ENCODE measurements at regions of chr12 and their contacts with region 1.

Region 1: GRCh38 chr12:12376646-12377448 is 20.0 kb downstream of the BORCS5 start:
- H3K4me3 ChIP-seq: no peak overlapping the region
- H3K27ac ChIP-seq: no peak overlapping the region
- H3K4me1 ChIP-seq: no peaks in the 10 kb centered on the region
- CTCF ChIP-seq: peak; percentile 46

Region 2: DNA sequence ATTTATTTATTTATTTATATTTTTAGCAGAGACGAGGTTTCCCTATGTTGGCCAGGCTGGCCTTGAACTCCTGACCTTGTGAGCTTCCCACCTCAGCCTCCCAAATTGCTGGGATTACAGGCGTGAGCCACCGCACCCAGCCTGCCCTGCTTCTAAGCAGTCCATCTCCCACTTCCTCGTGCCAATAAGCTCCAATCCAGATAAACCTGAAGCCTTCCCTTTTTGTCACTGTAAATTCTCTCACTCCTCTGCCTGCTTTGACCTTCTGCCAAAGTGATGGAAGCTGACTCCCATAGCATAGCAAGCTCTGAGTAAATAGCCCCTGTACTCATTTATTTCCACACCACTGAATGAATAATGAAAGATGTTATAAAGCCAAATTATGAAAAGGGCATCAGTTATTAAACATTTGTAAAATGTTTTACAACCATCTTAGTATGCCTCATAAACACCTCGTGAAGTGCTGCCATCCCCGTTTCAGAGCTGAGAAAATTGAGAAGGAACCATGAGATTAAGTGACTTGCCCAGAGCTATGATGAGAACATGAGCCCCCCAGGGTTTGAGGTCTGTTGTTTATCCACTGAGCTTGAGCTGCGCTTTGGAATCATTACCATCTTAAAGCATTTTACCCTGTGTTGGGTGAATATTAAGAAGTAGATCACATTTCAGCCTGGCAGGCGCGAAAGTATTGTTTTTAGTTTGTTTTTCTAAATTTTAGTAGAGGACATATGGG is 57.2 kb before region 1 on chr12:
- CTCF ChIA-PET with region 1: no interaction called
- POLR2A ChIA-PET with region 1: no interaction called
- H3K4me3 ChIP-seq: no peak overlapping the region
- H3K27ac ChIP-seq: peak overlapping the region; percentile 84
- H3K4me1 ChIP-seq: peaks cover 9% of the 10 kb centered on the region
- CTCF ChIP-seq: no peak

Region 3: GRCh38 chr12:12441843-12442503 is 65.1 kb after region 1 on chr12:
- CTCF ChIA-PET with region 1: no interaction called
- POLR2A ChIA-PET with region 1: no interaction called
- H3K4me3 ChIP-seq: no peak overlapping the region
- H3K27ac ChIP-seq: no peak overlapping the region
- H3K4me1 ChIP-seq: no peaks in the 10 kb centered on the region
- CTCF ChIP-seq: no peak

Region 4: DNA sequence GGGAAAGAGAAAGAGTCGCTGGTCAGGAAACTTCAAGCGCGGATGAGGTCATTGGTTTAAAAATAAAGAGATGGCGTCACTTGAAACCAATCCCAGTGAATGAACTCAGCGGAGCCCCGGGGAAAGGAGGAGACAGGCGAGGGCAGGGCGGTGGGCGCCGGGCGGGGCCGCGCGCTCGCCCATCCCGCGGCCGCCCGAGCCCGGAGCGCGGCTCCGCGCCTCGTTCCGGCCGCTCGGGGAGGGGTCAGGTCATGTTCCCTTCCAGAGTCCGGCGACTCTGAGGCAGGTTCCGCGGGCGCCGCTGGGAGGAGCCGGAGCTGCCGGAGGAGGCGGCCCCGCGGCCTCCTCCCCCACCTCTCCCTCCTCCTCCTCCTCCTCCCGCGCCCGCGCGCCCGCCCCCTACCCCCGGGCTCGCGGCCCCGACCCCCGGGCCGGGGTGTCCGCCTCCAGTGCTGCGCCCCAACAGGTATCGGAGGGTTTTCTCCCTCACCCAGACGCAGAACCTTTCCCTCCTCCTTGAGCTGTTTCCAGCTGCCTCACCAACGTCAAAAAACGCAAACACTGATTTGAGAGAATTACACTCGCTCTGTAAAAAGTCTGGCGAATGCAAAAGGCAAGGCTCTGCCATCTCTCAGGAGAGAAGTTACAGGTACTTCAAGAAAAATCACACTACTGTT is 185.9 kb after region 1 on chr12 and contains the start of gene DUSP16:
- CTCF ChIA-PET with region 1: interaction called, 15 read pairs
- POLR2A ChIA-PET with region 1: no interaction called
- H3K4me3 ChIP-seq: peak within 1 kb of the TSS; percentile 58
- H3K27ac ChIP-seq: peak within 1 kb of the TSS; percentile 99
- H3K4me1 ChIP-seq: peaks cover 15% of the 10 kb centered on the region
- CTCF ChIP-seq: no peak

Region 5: GRCh38 chr12:12654691-12655460 is 278.0 kb after region 1 on chr12:
- CTCF ChIA-PET with region 1: interaction called, 23 read pairs
- POLR2A ChIA-PET with region 1: no interaction called
- H3K4me3 ChIP-seq: no peak overlapping the region
- H3K27ac ChIP-seq: no peak overlapping the region
- H3K4me1 ChIP-seq: no peaks in the 10 kb centered on the region
- CTCF ChIP-seq: no peak

Region 6: GRCh38 chr12:12704593-12705230 is 327.9 kb after region 1 on chr12:
- CTCF ChIA-PET with region 1: interaction called, 26 read pairs
- POLR2A ChIA-PET with region 1: no interaction called
- H3K4me3 ChIP-seq: no peak overlapping the region
- H3K27ac ChIP-seq: no peak overlapping the region
- H3K4me1 ChIP-seq: peaks cover 8% of the 10 kb centered on the region
- CTCF ChIP-seq: peak; percentile 98

Measured in HEK293 (cell line).